ENCODE measurements at regions of chr1 and their contacts with region 1.

Region 1: GRCh38 chr1:222665964-222666363 is 46.3 kb downstream of the AIDA start:
- DNase-seq: no peak
- H3K4me3 ChIP-seq: no peak overlapping the region
- H3K27ac ChIP-seq: no peak overlapping the region
- H3K4me1 ChIP-seq: peaks cover 0 to 4% (median 0%) of the 10 kb centered on the region in 6 donors
- H3K27me3 ChIP-seq: no peaks in the 10 kb centered on the region
- CTCF ChIP-seq: no peak
- POLR2A ChIP-seq: no peak

Region 2: DNA sequence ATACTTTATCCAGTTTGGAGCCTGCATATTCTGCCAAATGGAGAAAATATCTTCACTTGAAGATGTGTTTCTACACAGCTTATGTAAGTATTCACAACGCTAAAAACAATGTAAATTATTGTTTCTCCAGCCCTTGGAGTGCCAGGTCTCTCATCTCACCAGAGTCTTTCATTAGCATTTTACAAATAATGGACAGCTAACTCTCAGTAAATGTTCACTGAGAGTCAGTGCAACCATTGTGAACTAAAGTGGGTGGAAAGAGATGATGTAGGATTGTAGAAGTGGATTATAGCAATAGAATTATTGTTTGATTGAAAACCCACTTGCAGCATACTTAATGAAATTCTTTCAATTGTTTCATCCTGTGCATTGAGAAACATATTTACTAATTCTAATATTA is 62.8 kb after region 1 on chr1:
- intact Hi-C with region 1: loop called (anchors 10 kb)
- DNase-seq: no peak
- H3K4me3 ChIP-seq: no peak overlapping the region
- H3K27ac ChIP-seq: peak overlapping the region in 1 of 8 donors; percentile 89
- H3K4me1 ChIP-seq: peaks cover 0 to 45% (median 19%) of the 10 kb centered on the region in 6 donors
- H3K27me3 ChIP-seq: no peaks in the 10 kb centered on the region
- CTCF ChIP-seq: no peak
- POLR2A ChIP-seq: no peak